Left ventricle myocardium superior (tissue), 1 donor: ENCODE measurements at regions of chr21 and their contacts with region 1.

Region 1: DNA sequence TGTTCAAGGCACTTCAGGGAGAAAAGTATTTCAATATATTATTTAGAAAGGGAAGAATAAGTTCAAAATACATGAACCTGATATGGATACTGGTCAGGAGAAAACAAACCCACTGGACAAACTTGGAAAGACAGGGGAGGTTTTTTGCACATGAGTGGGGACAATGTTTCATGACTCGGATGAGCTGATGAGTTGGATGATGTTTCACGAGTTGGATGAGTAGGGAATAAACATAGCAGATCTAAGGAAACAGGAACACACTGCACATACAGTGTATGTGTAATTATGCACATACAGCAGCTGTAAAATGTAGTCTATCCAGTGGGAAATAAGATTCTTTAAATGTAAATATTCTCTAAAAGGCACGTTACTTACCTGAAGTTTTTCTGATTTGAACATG is 682.9 kb upstream of the ADAMTS5 start:
- DNase-seq: no peak
- ATAC-seq: no peak

Region 2: GRCh38 chr21:26982767-26983166 is 667.0 kb before region 1 on chr21:
- intact Hi-C with region 1: loop called (anchors 10 kb)
- DNase-seq: no peak
- ATAC-seq: no peak

Region 3: GRCh38 chr21:27700974-27701614 is 51.3 kb after region 1 on chr21:
- intact Hi-C with region 1: no loop called
- DNase-seq: peak; percentile 87
- ATAC-seq: peak; percentile 92

Region 4: DNA sequence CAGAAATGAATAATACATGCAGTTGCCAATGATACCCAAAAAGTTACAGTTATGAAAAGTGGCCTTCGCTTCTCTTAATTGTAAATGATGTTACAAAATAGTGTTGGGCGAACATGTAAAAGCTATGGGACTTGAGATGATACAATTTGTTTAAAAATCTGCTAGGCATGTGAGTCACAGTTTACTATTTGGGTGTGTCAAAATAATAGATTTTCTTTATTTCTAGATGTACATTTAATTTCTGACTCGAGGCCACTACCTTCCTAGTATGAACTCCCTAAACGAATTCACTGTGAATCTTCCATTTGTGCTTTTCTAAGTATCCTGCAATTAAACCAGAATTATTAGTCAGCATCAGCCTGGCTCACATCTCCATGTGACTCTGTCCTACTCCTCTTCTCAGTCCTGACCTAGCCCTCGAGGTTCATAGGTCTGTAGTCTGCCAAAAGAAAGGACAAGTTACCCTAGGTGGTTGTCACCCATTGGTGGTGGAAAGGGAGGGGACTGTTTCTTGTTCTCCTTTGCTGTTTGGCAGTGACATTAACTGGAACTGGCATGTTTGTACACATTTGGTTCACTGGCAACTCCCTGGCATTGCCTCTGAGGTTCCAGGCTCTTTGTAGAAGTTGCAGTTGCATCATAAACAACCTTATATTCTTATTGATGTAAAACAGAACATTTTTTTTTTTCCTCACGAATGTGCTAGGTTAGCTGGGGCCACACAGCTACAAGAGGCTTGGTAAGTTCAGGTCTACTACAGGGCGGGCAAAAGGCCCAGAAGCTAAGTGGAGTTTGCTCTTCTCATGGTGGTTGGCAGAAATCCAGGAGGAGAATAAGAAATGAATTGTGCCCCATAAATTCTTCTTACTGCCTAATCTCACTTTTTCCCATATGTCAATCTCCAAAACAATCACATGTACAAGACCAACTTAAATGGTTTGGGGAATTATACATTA is 63.7 kb after region 1 on chr21:
- intact Hi-C with region 1: no loop called
- DNase-seq: no peak
- ATAC-seq: no peak